ENCODE measurements at regions of chr4 and their contacts with region 1.

Region 1: DNA sequence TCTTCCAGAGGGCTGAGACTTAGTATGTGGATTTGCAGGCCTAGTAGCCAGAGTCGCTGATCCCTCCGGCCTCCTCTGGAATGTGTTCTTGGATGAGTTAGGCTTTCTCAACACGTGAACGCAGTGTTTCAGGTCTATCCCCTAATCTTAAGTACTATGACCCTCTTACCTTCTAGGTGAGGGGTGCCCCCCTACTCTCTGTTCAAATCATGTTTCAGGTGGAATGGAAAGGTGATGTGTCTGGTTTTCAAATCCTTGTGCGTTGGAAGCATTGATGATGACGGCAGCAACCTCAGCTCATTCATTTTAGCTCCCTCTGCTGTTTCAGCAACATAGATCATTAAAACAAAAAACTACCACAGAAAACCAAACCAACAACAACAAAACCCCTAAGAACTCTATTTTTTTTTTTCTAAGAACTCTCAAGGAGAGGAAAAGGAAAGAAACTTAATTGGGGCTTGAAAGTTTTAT is 56.4 kb downstream of the RWDD4 start:
- DNase-seq: no peak
- ATAC-seq: peak in 3 of 4 donors; percentile 69 to 74 (median 71)
- H3K4me3 ChIP-seq: no peak overlapping the region
- H3K27ac ChIP-seq: no peak overlapping the region
- H3K4me1 ChIP-seq: peaks cover 0 to 10% (median 0%) of the 10 kb centered on the region in 3 donors
- H3K27me3 ChIP-seq: no peaks in the 10 kb centered on the region
- CTCF ChIP-seq: no peak

Region 2: GRCh38 chr4:183297675-183298074 is 304.9 kb before region 1 on chr4:
- intact Hi-C with region 1: no loop called
- DNase-seq: no peak
- ATAC-seq: no peak
- H3K4me3 ChIP-seq: no peak overlapping the region
- H3K27ac ChIP-seq: no peak overlapping the region
- H3K4me1 ChIP-seq: no peaks in the 10 kb centered on the region
- H3K27me3 ChIP-seq: no peaks in the 10 kb centered on the region
- CTCF ChIP-seq: no peak

Region 3: DNA sequence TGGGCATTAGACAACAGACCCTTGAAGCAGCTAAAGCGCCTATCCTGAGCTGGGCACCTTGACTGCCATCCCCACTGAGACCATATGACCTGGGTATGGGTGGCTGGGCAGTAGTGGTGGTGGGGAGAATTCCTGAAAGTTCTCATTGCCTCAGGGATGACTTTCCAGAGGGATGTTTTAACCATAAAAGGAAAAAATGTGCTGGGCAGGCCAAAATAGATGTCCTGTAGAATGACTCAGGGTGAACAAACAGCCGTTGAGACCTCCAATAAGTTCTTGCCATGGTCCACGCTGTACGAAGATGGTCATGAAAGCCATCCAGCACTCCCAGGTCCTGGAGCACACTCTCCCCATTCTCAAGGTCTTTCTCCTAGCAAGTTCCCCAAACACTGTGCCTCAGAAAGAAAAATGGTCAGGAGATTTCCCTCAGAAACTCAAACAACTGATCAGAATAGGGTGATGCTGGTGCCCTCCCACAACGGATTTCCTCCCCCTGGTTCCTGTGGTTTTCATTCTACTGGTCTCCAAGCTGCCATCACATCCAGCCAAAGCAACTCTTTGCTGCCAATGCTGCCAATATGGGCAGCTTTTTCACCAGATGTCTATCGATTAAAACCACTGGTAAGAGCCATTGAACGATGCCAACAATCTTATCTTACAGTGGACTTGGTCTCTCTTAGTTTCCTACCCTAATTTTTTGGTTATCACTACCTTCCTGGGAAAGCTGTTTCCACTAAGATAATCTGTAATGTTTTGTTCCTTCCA is 147.0 kb before region 1 on chr4:
- intact Hi-C with region 1: loop called in 2 of 3 experiments (anchors 5 to 10 kb)
- DNase-seq: no peak
- ATAC-seq: no peak
- H3K4me3 ChIP-seq: no peak overlapping the region
- H3K27ac ChIP-seq: no peak overlapping the region
- H3K4me1 ChIP-seq: no peaks in the 10 kb centered on the region
- H3K27me3 ChIP-seq: no peaks in the 10 kb centered on the region
- CTCF ChIP-seq: no peak

Region 4: DNA sequence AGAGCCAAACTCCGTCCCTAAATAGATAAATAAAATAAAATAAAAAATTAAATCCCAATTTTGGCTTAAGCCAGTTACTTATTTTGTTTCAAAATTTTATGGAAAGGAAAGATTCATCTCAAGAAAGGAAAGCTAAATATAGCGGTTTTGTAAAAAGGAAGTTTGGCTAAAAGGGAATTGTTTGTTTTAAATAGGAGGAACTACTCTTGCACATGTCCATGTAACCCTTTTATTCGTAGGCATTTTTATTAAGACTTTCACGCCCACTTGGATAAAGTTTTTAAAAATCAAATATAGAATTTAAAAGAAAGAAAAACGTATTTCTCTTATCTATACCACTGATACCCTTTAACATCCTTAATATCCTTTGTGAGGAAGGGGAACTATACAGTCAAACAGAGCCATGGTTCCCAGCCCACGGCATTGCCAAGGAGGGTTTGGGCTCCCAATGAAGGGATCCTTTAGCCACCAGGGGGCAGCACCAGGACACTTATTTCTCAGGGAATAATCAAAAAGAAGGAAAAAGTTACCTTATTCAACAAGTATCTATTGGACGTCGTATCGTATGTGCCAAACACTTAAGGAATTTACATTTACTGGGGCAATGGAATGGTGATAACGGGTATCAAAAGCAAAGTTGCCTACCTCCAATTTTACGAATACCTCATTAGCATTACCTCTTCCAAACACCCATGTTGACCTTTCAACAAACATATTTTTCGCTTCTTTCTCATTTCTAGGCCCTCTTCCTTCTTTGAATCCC is 130.5 kb before region 1 on chr4:
- intact Hi-C with region 1: loop called in 1 of 3 experiments (anchors 10 kb)
- DNase-seq: peak; percentile 75 to 95 (median 88)
- ATAC-seq: peak; percentile 94 to 99 (median 98)
- H3K4me3 ChIP-seq: no peak overlapping the region
- H3K27ac ChIP-seq: no peak overlapping the region
- H3K4me1 ChIP-seq: peaks cover 0 to 4% (median 0%) of the 10 kb centered on the region in 3 donors
- H3K27me3 ChIP-seq: no peaks in the 10 kb centered on the region
- CTCF ChIP-seq: peak; percentile 75 to 92 (median 84)

Region 5: DNA sequence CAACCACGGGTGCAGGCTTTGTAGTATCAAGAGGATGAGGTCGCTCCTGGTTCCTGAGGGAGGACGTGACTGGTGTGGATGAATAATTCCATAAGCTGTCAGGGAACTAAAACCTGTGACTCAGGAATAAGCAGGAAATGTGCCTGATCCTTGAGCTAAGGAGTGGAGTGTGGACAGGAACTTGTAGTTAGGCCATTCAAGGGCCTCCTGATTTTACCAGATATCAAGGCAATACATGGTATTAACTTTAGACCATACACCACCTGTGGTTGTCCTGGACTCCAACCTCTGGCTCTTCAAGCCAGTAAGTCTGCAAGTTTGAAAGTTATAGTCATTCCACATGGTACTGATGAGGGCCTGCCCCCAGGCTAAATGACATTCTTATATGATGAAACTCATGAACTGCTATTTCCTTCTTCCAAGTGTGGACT is 109.8 kb before region 1 on chr4:
- intact Hi-C with region 1: loop called in 1 of 3 experiments (anchors 10 kb)
- DNase-seq: no peak
- ATAC-seq: peak in 1 of 4 donors; percentile 24
- H3K4me3 ChIP-seq: no peak overlapping the region
- H3K27ac ChIP-seq: no peak overlapping the region
- H3K4me1 ChIP-seq: no peaks in the 10 kb centered on the region
- H3K27me3 ChIP-seq: no peaks in the 10 kb centered on the region
- CTCF ChIP-seq: no peak

Measured in pancreas (tissue), 10 donors.